Lower leg skin (tissue), 4 donors: ENCODE measurements at regions of chr16 and their contacts with region 1.

Region 1: DNA sequence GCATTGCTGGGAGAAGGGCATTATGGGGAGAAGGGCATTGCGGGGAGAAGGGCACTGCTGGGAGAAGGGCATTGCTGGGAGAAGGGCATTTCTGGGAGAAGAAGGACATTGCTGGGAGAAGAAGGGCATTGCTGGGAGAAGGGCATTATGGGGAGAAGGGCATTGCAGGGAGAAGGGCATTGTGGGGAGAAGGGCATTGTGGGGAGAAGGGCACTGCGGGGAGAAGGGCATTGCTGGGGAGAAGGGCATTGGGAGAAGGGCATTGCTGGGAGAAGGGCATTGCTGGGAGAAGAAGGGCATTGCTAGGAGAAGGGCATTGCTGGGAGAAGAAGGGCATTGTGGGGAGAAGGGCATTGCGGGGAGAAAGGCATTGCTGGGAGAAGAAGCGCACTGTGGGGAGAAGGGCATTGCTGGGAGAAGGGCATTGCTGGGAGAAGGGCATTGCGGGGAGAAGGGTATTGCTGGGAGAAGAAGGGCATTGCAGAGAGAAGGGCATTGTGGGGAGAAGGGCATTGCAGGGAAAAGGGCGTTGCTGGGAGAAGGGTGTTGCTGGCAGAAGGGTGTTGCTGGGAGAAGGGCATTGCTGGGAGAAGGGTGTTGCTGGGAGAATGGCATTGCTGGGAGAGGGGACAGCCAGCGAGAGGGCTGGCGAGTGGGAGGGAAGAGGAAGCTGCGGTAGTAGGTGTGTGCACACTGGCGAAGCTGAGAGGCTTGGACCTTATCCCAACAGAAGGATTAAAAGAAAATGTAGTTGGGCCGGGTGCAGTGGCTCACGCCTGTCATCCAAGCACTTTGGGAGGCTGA is 4.6 kb upstream of the PYDC1 start:
- DNase-seq: no peak
- H3K4me3 ChIP-seq: no peak overlapping the region
- CTCF ChIP-seq: no peak
- POLR2A ChIP-seq: no peak

Region 2: GRCh38 chr16:31382485-31383161 is 161.1 kb after region 1 on chr16:
- intact Hi-C with region 1: loop called (anchors 5 kb)
- DNase-seq: peak in 1 of 2 donors; percentile 51
- H3K4me3 ChIP-seq: no peak overlapping the region
- CTCF ChIP-seq: no peak
- POLR2A ChIP-seq: no peak